ENCODE measurements at regions of chr4 and their contacts with region 1.

Region 1: GRCh38 chr4:61741327-61742096 is 541.4 kb downstream of the ADGRL3 start:
- DNase-seq: peak in 4 of 5 donors; percentile 21 to 59 (median 32)
- ATAC-seq: peak; percentile 61 to 95 (median 86)
- H3K4me3 ChIP-seq: peak overlapping the region in 5 of 12 donors; percentile 1 to 26 (median 12)
- H3K27ac ChIP-seq: peak overlapping the region in 9 of 12 donors; percentile 9 to 69 (median 26)
- H3K4me1 ChIP-seq: peaks cover 0 to 13% (median 0%) of the 10 kb centered on the region in 12 donors
- H3K27me3 ChIP-seq: no peaks in the 10 kb centered on the region
- CTCF ChIP-seq: peak in 10 of 12 donors; percentile 15 to 50 (median 39)
- POLR2A ChIP-seq: no peak

Region 2: GRCh38 chr4:61200187-61200915 is 541.2 kb before region 1 on chr4 and contains the start of gene ADGRL3:
- intact Hi-C with region 1: loop called in 1 of 10 experiments (anchors 5 kb)
- DNase-seq: peak; percentile 45 to 72 (median 47)
- ATAC-seq: peak; percentile 35 to 65 (median 57)
- H3K4me3 ChIP-seq: peak within 1 kb of the TSS; percentile 57 to 76 (median 65)
- H3K27ac ChIP-seq: peak within 1 kb of the TSS; percentile 9 to 70 (median 46)
- H3K4me1 ChIP-seq: peaks cover 0 to 27% (median 0%) of the 10 kb centered on the region in 12 donors
- H3K27me3 ChIP-seq: peaks cover 0 to 55% (median 20%) of the 10 kb centered on the region in 9 donors
- CTCF ChIP-seq: no peak
- POLR2A ChIP-seq: no peak
- total RNA-seq, gene ADGRL3: 3.4 to 24.4 (median 11.9) TPM

Region 3: DNA sequence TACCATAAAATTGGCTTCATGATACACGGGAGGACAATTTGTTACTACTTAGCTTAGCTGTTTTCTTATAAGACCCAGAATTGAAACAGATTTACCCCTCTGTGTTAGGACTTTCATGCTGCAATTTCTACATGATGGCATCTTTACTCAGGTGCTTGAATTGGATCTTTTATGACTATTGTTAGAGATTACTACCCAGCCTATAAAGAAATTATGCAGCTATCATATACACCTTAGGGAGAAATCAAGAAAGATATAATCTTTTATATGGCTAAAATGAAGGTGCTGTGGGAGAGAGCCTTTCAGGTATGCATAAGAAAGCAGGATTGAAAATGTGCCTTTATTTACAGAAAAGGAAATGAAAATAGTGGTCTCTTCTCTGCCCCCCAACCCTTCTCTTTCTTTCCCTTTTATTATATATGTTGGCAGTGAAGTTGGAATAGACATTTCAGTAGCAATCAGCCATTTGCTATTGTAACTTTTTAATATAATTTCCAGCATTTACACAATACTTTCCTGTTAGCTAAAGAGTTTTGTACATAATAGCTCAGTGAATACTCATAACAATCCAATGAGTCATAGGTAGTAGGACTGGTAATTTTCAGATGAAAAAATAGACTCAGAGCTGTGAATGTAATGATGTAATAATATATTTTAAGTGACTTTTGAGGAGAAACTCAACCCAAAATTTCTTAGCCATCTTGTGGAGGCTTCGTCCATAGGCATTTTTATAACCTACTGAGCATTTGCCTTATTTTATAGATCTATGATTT is 229.6 kb before region 1 on chr4:
- intact Hi-C with region 1: no loop called
- DNase-seq: no peak
- ATAC-seq: peak in 1 of 4 donors; percentile 73
- H3K4me3 ChIP-seq: no peak overlapping the region
- H3K27ac ChIP-seq: no peak overlapping the region
- H3K4me1 ChIP-seq: peaks cover 0 to 12% (median 0%) of the 10 kb centered on the region in 12 donors
- H3K27me3 ChIP-seq: no peaks in the 10 kb centered on the region
- CTCF ChIP-seq: no peak
- POLR2A ChIP-seq: no peak

Region 4: DNA sequence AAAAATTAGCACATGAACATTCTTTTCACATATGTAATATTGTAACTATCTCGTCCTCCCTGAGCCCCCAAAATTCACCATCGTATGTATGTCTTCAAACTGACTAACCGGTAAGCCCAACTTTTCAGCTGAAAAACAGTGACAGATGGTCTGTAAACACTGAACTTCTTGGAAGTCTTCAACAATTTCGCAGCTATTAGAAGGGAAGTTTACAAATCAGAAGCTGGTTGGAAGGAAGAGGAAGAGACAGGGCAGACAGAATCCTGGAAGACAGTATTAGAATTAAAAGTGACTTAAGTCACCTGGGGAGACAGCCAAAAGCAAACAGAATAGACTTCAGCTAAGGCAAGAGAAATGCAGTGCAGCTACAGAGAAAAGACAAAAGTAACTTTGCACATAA is 317.1 kb after region 1 on chr4:
- intact Hi-C with region 1: no loop called
- DNase-seq: no peak
- ATAC-seq: no peak
- H3K4me3 ChIP-seq: no peak overlapping the region
- H3K27ac ChIP-seq: no peak overlapping the region
- H3K4me1 ChIP-seq: no peaks in the 10 kb centered on the region
- H3K27me3 ChIP-seq: no peaks in the 10 kb centered on the region
- CTCF ChIP-seq: no peak
- POLR2A ChIP-seq: no peak